B cell (primary cell): ENCODE measurements at regions of chr10 and their contacts with region 1.

Region 1: GRCh38 chr10:103888113-103888841 is 29.7 kb downstream of the STN1 start:
- DNase-seq: peak; percentile 65
- ATAC-seq: peak; percentile 76
- H3K4me3 ChIP-seq: no peak overlapping the region
- H3K4me3 Mint-ChIP-seq: no peak overlapping the region
- H3K27ac ChIP-seq: no peak overlapping the region
- H3K27ac Mint-ChIP-seq: no peak overlapping the region
- H3K4me1 ChIP-seq: no peaks in the 10 kb centered on the region
- H3K4me1 Mint-ChIP-seq: no peaks in the 10 kb centered on the region
- H3K27me3 ChIP-seq: no peaks in the 10 kb centered on the region
- H3K27me3 Mint-ChIP-seq: no peaks in the 10 kb centered on the region
- CTCF ChIP-seq: peak; percentile 88

Region 2: GRCh38 chr10:103901299-103901698 is 13.0 kb after region 1 on chr10:
- CTCF ChIA-PET with region 1: interaction called, 10 read pairs
- POLR2A ChIA-PET with region 1: no interaction called
- intact Hi-C with region 1: no loop called
- DNase-seq: no peak
- ATAC-seq: no peak
- H3K4me3 ChIP-seq: no peak overlapping the region
- H3K4me3 Mint-ChIP-seq: no peak overlapping the region
- H3K27ac ChIP-seq: no peak overlapping the region
- H3K27ac Mint-ChIP-seq: no peak overlapping the region
- H3K4me1 ChIP-seq: no peaks in the 10 kb centered on the region
- H3K4me1 Mint-ChIP-seq: no peaks in the 10 kb centered on the region
- H3K27me3 ChIP-seq: no peaks in the 10 kb centered on the region
- H3K27me3 Mint-ChIP-seq: no peaks in the 10 kb centered on the region
- CTCF ChIP-seq: no peak

Region 3: GRCh38 chr10:103918053-103918846 is 30.0 kb after region 1 on chr10 and contains the start of gene STN1:
- CTCF ChIA-PET with region 1: interaction called, 5 read pairs
- POLR2A ChIA-PET with region 1: no interaction called
- intact Hi-C with region 1: loop called (anchors 1 kb)
- DNase-seq: peak; percentile 96
- ATAC-seq: peak; percentile 93
- H3K4me3 ChIP-seq: peak within 1 kb of the TSS; percentile 67 to 95 (median 94)
- H3K4me3 Mint-ChIP-seq: peak within 1 kb of the TSS; percentile 99
- H3K27ac ChIP-seq: peak within 1 kb of the TSS; percentile 78 to 85
- H3K27ac Mint-ChIP-seq: peak within 1 kb of the TSS; percentile 96
- H3K4me1 ChIP-seq: peaks cover 27 to 38% of the 10 kb centered on the region in 2 donors
- H3K4me1 Mint-ChIP-seq: peaks cover 33% of the 10 kb centered on the region
- H3K27me3 ChIP-seq: no peaks in the 10 kb centered on the region
- H3K27me3 Mint-ChIP-seq: no peaks in the 10 kb centered on the region
- CTCF ChIP-seq: no peak
- total RNA-seq, gene STN1: 16.3 and 16.8 TPM in 2 replicates

Region 4: GRCh38 chr10:104049497-104050250 is 161.4 kb after region 1 on chr10:
- CTCF ChIA-PET with region 1: no interaction called
- POLR2A ChIA-PET with region 1: no interaction called
- intact Hi-C with region 1: no loop called
- DNase-seq: no peak
- ATAC-seq: no peak
- H3K4me3 ChIP-seq: no peak overlapping the region
- H3K4me3 Mint-ChIP-seq: no peak overlapping the region
- H3K27ac ChIP-seq: no peak overlapping the region
- H3K27ac Mint-ChIP-seq: no peak overlapping the region
- H3K4me1 ChIP-seq: no peaks in the 10 kb centered on the region
- H3K4me1 Mint-ChIP-seq: no peaks in the 10 kb centered on the region
- H3K27me3 ChIP-seq: peaks cover 0 to 2% (median 0%) of the 10 kb centered on the region in 4 experiments
- H3K27me3 Mint-ChIP-seq: no peaks in the 10 kb centered on the region
- CTCF ChIP-seq: no peak

Region 5: DNA sequence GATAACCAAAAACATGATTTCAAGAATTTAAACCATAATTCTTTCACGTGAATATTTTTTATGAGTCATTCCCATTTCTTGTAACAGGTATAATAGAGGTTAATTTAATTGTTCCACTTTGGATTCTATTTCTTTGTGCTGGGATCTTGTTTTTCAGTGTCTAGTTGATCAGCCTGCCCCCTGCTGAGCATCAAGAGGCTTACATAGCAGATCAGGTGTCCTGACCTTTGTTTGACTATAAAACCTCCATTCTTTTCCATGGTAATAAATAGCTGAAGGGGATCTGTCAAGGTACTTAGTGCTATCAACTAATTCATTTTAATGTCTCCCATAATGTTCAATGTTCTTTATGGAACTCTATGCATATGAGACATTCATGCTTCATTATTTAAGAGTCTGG is 192.5 kb after region 1 on chr10:
- CTCF ChIA-PET with region 1: interaction called, 18 read pairs
- POLR2A ChIA-PET with region 1: no interaction called
- intact Hi-C with region 1: loop called (anchors 1 kb)
- DNase-seq: peak; percentile 34
- ATAC-seq: no peak
- H3K4me3 ChIP-seq: no peak overlapping the region
- H3K4me3 Mint-ChIP-seq: no peak overlapping the region
- H3K27ac ChIP-seq: no peak overlapping the region
- H3K27ac Mint-ChIP-seq: no peak overlapping the region
- H3K4me1 ChIP-seq: no peaks in the 10 kb centered on the region
- H3K4me1 Mint-ChIP-seq: no peaks in the 10 kb centered on the region
- H3K27me3 ChIP-seq: no peaks in the 10 kb centered on the region
- H3K27me3 Mint-ChIP-seq: peaks cover 11% of the 10 kb centered on the region
- CTCF ChIP-seq: peak; percentile 49

Region 6: DNA sequence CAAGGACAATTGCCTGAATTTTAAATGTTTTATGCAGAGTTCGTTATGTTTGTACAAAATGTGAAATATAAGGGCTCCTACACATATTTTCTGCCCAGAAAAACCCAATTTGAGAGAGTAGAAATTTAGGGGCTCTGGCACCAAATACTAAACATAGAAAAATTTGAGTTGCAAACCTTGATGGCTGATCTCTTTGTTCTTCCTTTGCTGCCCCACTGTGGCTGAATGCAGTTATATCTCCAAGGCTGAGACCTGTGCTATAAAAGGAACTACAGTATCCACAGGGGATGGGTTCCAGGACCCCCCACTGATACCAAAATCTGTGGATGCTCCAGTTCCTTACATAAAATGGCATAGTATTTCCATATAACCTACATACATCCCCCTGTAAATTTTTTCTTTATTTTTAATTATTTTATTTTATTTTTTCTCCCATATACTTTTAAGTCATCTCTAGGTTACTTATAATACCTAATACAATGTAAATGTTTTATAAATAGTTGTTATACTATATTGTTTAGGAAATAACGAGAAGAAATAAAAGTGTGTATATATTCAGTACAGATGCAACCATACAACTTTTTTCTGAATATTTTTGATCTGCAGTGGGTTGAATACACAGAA is 321.4 kb after region 1 on chr10:
- CTCF ChIA-PET with region 1: interaction called, 19 read pairs
- POLR2A ChIA-PET with region 1: no interaction called
- intact Hi-C with region 1: loop called (anchors 1 kb)
- DNase-seq: peak; percentile 46
- ATAC-seq: no peak
- H3K4me3 ChIP-seq: no peak overlapping the region
- H3K4me3 Mint-ChIP-seq: no peak overlapping the region
- H3K27ac ChIP-seq: no peak overlapping the region
- H3K27ac Mint-ChIP-seq: no peak overlapping the region
- H3K4me1 ChIP-seq: no peaks in the 10 kb centered on the region
- H3K4me1 Mint-ChIP-seq: no peaks in the 10 kb centered on the region
- H3K27me3 ChIP-seq: peaks cover 0 to 6% (median 0%) of the 10 kb centered on the region in 4 experiments
- H3K27me3 Mint-ChIP-seq: peaks cover 41% of the 10 kb centered on the region
- CTCF ChIP-seq: peak; percentile 64

Region 7: DNA sequence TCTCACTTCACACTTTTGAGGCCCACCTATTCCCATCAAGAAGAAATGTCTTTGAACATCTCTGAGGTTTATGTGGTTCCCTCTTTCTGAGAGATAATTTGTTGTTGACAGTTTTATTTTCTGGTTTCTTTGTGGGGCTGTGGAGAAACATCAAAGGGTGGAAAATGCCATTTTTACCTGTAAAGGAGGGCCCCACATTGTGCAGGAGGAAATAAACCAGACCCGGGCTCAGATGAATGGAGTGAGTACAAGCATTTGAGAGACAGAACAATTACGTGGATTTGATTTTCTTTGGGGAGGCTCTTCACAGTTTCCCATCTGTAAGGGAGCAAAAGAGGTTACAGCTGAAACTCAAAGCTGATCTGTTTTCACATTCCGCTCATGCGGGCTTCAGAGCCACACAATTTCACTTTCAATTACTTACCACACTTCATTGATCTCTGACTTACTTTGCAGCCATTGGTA is 420.2 kb after region 1 on chr10:
- CTCF ChIA-PET with region 1: interaction called, 11 read pairs
- POLR2A ChIA-PET with region 1: no interaction called
- intact Hi-C with region 1: no loop called
- DNase-seq: no peak
- ATAC-seq: no peak
- H3K4me3 ChIP-seq: no peak overlapping the region
- H3K4me3 Mint-ChIP-seq: no peak overlapping the region
- H3K27ac ChIP-seq: peak overlapping the region in 1 of 2 donors; percentile 49
- H3K27ac Mint-ChIP-seq: peak overlapping the region; percentile 76
- H3K4me1 ChIP-seq: peaks cover 13 to 21% of the 10 kb centered on the region in 2 donors
- H3K4me1 Mint-ChIP-seq: peaks cover 23% of the 10 kb centered on the region
- H3K27me3 ChIP-seq: no peaks in the 10 kb centered on the region
- H3K27me3 Mint-ChIP-seq: no peaks in the 10 kb centered on the region
- CTCF ChIP-seq: no peak